Thyroid gland (tissue), 4 donors: ENCODE measurements at regions of chr6 and their contacts with region 1.

Region 1: GRCh38 chr6:60695232-60695631 is 1590.8 kb downstream of the KHDRBS2 start:
- DNase-seq: no peak
- H3K4me3 ChIP-seq: no peak overlapping the region
- H3K27ac ChIP-seq: no peak overlapping the region
- H3K4me1 ChIP-seq: no peaks in the 10 kb centered on the region
- H3K27me3 ChIP-seq: no peaks in the 10 kb centered on the region
- CTCF ChIP-seq: no peak
- POLR2A ChIP-seq: no peak

Region 2: GRCh38 chr6:60643870-60644269 is 51.4 kb before region 1 on chr6:
- intact Hi-C with region 1: loop called (anchors 10 kb)
- DNase-seq: no peak
- H3K4me3 ChIP-seq: no peak overlapping the region
- H3K27ac ChIP-seq: no peak overlapping the region
- H3K4me1 ChIP-seq: no peaks in the 10 kb centered on the region
- H3K27me3 ChIP-seq: no peaks in the 10 kb centered on the region
- CTCF ChIP-seq: no peak
- POLR2A ChIP-seq: no peak